Activated CD4-positive, alpha-beta T cell treated with anti-CD3 and anti-CD28 coated beads for 36 hours (primary cell): ENCODE measurements at regions of chr7 and their contacts with region 1.

Region 1: DNA sequence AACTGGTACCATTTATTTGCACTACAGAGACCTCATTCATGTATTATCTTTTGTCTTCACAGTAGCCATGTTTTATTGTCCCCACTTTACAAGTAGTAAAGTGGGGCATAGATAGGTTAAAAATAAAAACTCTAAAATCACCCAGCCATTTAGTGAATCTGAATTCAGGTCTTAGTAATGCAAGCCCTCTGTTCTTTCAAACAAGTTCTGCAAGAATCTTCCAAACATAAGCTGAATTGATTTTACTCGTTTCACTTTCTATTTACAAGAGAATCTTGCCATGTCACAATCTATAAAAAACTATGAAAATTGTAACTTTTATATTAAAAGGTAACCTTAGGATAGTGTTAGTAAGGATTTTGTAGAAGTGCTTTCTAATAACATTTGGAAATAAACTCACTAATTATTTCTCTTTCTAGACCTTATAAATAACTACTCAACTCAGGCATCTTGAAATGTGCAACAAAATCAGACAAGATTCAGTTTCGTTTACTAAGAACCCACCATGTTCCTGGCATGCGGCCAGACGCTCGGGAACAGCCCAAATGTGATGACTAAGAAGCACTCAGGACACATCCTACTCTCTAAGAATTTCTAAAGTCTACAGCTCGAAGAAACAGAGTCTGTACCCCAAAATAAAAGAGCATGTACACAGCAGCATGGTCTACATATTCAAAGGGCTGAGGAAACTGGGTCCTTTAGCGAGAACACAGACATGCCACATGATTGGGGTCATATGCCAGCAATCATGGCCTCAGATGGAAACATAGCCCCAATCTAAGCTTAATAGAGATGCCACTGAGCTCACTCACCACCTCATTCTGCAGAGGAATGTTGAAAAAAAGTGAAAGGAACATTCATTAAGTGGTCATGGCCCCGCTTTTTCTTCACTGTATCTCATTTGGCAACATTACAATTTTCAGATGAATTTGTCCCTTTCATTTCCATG is 167.6 kb downstream of the AMPH start:
- DNase-seq: peak; percentile 93
- ATAC-seq: peak; percentile 81
- H3K4me3 Mint-ChIP-seq: peak overlapping the region; percentile 26
- H3K27ac Mint-ChIP-seq: peak overlapping the region; percentile 29
- H3K4me1 Mint-ChIP-seq: peaks cover 19% of the 10 kb centered on the region
- H3K27me3 Mint-ChIP-seq: peaks cover 5% of the 10 kb centered on the region

Region 2: GRCh38 chr7:38178004-38178694 is 285.4 kb before region 1 on chr7 and contains the start of gene STARD3NL:
- CTCF ChIA-PET with region 1: no interaction called
- POLR2A ChIA-PET with region 1: no interaction called
- intact Hi-C with region 1: loop called in 1 of 2 experiments (anchors 1 kb)
- DNase-seq: peak; percentile 92
- ATAC-seq: peak; percentile 100
- H3K4me3 Mint-ChIP-seq: peak within 1 kb of the TSS; percentile 95
- H3K27ac Mint-ChIP-seq: peak within 1 kb of the TSS; percentile 93
- H3K4me1 Mint-ChIP-seq: peaks cover 37% of the 10 kb centered on the region
- H3K27me3 Mint-ChIP-seq: peaks cover 10% of the 10 kb centered on the region
- total RNA-seq, gene STARD3NL: 27.9 to 30.8 TPM

Region 3: DNA sequence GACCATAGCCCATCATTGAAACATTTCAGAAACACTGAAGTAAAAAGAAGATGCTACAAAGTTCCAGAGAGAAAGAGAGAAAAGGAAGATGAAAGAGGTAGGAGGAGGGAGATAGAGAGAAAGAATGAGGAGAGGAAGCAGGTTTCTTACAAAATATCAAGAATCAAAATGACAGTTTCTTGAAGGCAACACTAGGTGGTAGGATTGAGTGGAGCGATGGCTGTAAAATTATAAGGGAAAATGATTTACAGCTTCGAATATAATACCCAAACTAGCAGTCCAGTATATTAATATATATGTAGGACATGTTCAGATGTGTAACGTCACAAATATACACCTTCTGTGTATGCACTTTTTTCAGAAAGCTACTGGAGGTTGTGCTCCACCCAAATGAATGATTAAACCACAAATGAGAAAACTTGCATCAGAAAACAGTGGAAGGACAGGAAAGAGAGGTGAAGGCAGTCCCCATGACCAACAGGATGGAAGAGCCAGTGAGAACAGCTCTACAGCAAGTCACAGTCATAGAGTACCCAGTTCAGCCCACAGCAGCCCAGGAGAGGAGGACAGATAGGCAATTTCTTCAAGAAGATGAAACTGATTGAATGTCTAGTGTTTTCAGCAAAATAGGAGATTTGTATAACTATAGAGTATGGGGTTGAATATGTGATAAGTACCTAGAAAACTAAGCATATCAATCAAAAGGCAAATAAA is 38.6 kb before region 1 on chr7:
- CTCF ChIA-PET with region 1: no interaction called
- POLR2A ChIA-PET with region 1: no interaction called
- intact Hi-C with region 1: loop called in 1 of 2 experiments (anchors 1 kb)
- DNase-seq: no peak
- ATAC-seq: peak; percentile 60
- H3K4me3 Mint-ChIP-seq: no peak overlapping the region
- H3K27ac Mint-ChIP-seq: peak overlapping the region; percentile 26
- H3K4me1 Mint-ChIP-seq: peaks cover 41% of the 10 kb centered on the region
- H3K27me3 Mint-ChIP-seq: no peaks in the 10 kb centered on the region

Region 4: GRCh38 chr7:38451840-38452239 is 11.7 kb before region 1 on chr7:
- CTCF ChIA-PET with region 1: interaction called, 3 read pairs
- POLR2A ChIA-PET with region 1: interaction called, 4 read pairs
- intact Hi-C with region 1: loop called in 1 of 2 experiments (anchors 1 kb)
- DNase-seq: no peak
- ATAC-seq: peak; percentile 46
- H3K4me3 Mint-ChIP-seq: no peak overlapping the region
- H3K27ac Mint-ChIP-seq: no peak overlapping the region
- H3K4me1 Mint-ChIP-seq: no peaks in the 10 kb centered on the region
- H3K27me3 Mint-ChIP-seq: peaks cover 4% of the 10 kb centered on the region